B cell (primary cell): ENCODE measurements at regions of chr14 and their contacts with region 1.

Region 1: DNA sequence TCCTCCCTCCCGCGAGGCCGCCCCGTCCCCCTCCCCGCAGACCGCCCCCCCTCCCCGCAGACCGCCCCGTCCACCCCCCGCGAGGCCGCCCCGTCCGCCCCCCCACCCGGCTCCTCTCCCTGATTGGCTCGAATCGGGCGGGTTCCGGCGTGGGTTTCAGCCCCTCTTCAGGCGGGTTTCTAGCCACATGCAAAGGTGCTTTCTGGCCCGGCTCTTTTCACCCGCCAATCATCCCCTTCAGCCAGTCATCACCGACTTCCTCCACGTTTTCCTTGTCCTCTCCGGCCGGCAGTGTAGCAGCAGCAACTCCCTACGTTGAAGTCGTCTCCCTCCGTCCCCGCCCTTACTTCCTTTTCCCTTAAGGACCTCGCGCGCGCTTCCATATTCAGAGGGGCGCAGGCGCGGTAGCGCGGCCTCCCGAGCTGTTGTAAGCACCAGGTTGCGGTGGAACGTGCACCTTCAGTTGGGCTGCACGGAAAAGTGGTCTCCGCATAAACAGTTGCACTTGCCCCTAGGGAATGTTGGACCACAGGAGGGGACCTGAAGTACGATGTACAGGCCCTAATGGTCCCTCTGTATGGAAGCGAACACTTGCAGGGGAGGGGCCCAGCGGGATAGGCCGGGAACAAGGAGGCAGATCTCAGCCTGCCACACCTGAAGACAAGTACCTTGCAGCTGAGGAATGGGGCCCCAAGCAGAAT is 44.6 kb upstream of the ESR2 start:
- DNase-seq: peak; percentile 90
- ATAC-seq: peak; percentile 90
- H3K4me3 ChIP-seq: peak overlapping the region; percentile 28 to 90 (median 80)
- H3K4me3 Mint-ChIP-seq: peak overlapping the region; percentile 90
- H3K27ac ChIP-seq: peak overlapping the region; percentile 69 to 82
- H3K27ac Mint-ChIP-seq: peak overlapping the region; percentile 90
- H3K4me1 ChIP-seq: peaks cover 14 to 17% of the 10 kb centered on the region in 2 donors
- H3K4me1 Mint-ChIP-seq: peaks cover 26% of the 10 kb centered on the region
- H3K27me3 ChIP-seq: no peaks in the 10 kb centered on the region
- H3K27me3 Mint-ChIP-seq: no peaks in the 10 kb centered on the region
- CTCF ChIP-seq: no peak

Region 2: DNA sequence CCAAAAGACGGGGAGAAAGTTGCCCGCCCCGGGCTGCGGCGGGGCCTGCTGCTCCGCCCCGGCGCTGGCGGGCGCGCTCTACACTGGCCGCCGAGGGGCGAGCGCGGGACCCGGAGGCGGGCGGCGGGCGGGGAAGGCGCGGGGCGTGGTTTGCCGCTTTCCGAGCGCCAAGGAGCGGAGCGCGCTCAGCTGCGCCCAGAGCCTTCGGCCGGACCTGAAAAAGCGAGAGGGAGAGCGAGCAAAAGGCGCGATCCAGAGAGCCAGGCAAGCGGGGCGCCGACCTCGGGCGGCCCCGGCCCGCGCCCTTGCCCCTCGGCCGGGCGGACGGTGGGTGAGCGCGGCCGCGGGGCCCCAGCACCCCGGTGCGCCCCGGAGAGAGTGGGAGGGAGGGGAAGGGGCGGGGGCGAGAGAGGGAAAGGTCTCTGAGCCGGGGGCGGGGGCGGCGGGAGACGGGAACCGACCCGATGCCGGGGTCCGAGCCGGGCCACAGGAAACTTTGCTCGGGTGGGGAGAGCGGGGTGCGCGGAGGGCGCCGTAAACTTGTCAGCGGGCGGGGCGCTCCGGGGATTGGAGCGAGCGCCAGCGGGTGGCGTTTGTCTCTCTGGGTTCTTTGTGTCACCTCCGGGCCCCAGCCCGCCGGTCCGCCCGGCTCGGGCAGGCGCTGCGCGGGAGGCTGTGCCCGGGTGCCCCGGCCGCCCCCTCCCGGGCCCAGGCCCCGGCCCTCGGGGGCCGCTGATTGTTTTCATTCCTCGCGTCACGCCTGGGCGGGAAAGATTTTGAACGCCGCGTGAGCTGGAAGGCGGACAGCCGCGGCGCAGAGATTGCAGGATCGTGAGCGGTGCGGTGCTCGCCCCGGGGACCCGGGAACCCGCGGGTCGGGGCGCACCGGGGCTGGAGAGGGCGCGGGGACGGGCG is 485.7 kb before region 1 on chr14 and contains the start of gene SYNE2:
- CTCF ChIA-PET with region 1: no interaction called
- POLR2A ChIA-PET with region 1: no interaction called
- intact Hi-C with region 1: no loop called
- DNase-seq: peak; percentile 89
- ATAC-seq: peak; percentile 84
- H3K4me3 ChIP-seq: peak within 1 kb of the TSS; percentile 46 to 72 (median 64)
- H3K4me3 Mint-ChIP-seq: peak within 1 kb of the TSS; percentile 94
- H3K27ac ChIP-seq: peak within 1 kb of the TSS; percentile 30 to 43
- H3K27ac Mint-ChIP-seq: peak within 1 kb of the TSS; percentile 95
- H3K4me1 ChIP-seq: peaks cover 13 to 14% of the 10 kb centered on the region in 2 donors
- H3K4me1 Mint-ChIP-seq: peaks cover 27% of the 10 kb centered on the region
- H3K27me3 ChIP-seq: peaks cover 0 to 6% (median 0%) of the 10 kb centered on the region in 4 experiments
- H3K27me3 Mint-ChIP-seq: no peaks in the 10 kb centered on the region
- CTCF ChIP-seq: peak; percentile 33
- total RNA-seq, gene SYNE2: 105 TPM in 2 replicates

Region 3: DNA sequence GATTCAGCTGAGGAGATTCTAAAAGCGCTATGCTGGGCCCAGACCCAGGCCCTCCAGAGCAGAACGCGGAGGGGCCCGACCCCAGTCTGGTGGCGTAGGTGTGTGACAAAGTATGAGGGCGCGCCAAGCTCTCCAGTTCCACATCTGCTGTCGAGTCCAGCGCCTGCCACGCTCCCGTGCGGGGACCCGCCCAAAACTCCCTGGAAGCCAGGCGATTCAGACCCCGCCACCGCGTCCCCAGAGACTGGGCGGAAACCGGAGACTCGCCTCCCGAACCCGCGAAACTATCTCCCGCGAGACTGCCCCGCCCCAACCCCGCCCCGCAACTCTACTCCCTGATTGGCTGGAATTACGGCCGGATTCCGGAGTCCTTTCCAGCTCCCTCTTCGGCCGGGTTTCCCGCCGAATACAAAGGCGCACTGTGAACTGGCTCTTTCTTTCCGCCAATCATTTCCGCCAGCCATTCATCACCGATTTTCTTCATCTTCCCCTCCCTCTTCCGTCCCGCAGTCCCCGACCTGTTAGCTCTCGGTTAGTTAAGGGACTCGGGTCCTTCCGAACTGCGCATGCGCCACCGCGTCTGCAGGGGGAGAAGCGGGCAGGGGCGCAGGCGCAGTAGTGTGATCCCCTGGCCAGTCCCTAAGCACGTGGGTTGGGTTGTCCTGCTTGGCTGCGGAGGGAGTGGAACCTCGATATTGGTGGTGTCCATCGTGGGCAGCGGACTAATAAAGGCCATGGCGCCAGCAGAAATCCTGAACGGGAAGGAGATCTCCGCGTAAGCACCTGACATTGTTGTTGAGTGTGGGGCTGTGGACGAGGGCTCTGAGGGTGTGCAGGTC is 49.1 kb after region 1 on chr14 and contains the start of gene MTHFD1:
- CTCF ChIA-PET with region 1: interaction called, 4 read pairs
- POLR2A ChIA-PET with region 1: interaction called, 10 read pairs
- intact Hi-C with region 1: loop called (anchors 1 kb)
- DNase-seq: peak; percentile 98
- ATAC-seq: peak; percentile 75
- H3K4me3 ChIP-seq: peak within 1 kb of the TSS; percentile 68 to 93 (median 84)
- H3K4me3 Mint-ChIP-seq: peak within 1 kb of the TSS; percentile 93
- H3K27ac ChIP-seq: peak within 1 kb of the TSS; percentile 75 to 80
- H3K27ac Mint-ChIP-seq: peak within 1 kb of the TSS; percentile 95
- H3K4me1 ChIP-seq: peaks cover 27 to 34% of the 10 kb centered on the region in 2 donors
- H3K4me1 Mint-ChIP-seq: peaks cover 42% of the 10 kb centered on the region
- H3K27me3 ChIP-seq: no peaks in the 10 kb centered on the region
- H3K27me3 Mint-ChIP-seq: no peaks in the 10 kb centered on the region
- CTCF ChIP-seq: no peak
- total RNA-seq, gene MTHFD1: 47.1 and 51.3 TPM in 2 replicates

Region 4: GRCh38 chr14:64478634-64479250 is 140.0 kb after region 1 on chr14:
- CTCF ChIA-PET with region 1: interaction called, 71 read pairs
- POLR2A ChIA-PET with region 1: interaction called, 7 read pairs
- intact Hi-C with region 1: no loop called
- DNase-seq: peak; percentile 63
- ATAC-seq: no peak
- H3K4me3 ChIP-seq: no peak overlapping the region
- H3K4me3 Mint-ChIP-seq: no peak overlapping the region
- H3K27ac ChIP-seq: no peak overlapping the region
- H3K27ac Mint-ChIP-seq: no peak overlapping the region
- H3K4me1 ChIP-seq: no peaks in the 10 kb centered on the region
- H3K4me1 Mint-ChIP-seq: peaks cover 3% of the 10 kb centered on the region
- H3K27me3 ChIP-seq: no peaks in the 10 kb centered on the region
- H3K27me3 Mint-ChIP-seq: no peaks in the 10 kb centered on the region
- CTCF ChIP-seq: peak; percentile 85

Region 5: GRCh38 chr14:64540208-64541157 is 201.7 kb after region 1 on chr14 and contains the start of gene HSPA2:
- CTCF ChIA-PET with region 1: no interaction called
- POLR2A ChIA-PET with region 1: no interaction called
- intact Hi-C with region 1: loop called (anchors 1 kb)
- DNase-seq: peak; percentile 98
- ATAC-seq: peak; percentile 90
- H3K4me3 ChIP-seq: peak within 1 kb of the TSS; percentile 74 to 98 (median 85)
- H3K4me3 Mint-ChIP-seq: peak within 1 kb of the TSS; percentile 100
- H3K27ac ChIP-seq: peak within 1 kb of the TSS; percentile 60 to 67
- H3K27ac Mint-ChIP-seq: peak within 1 kb of the TSS; percentile 97
- H3K4me1 ChIP-seq: peaks cover 26 to 32% of the 10 kb centered on the region in 2 donors
- H3K4me1 Mint-ChIP-seq: peaks cover 31% of the 10 kb centered on the region
- H3K27me3 ChIP-seq: peaks cover 0 to 19% (median 5%) of the 10 kb centered on the region in 4 experiments
- H3K27me3 Mint-ChIP-seq: peaks cover 5% of the 10 kb centered on the region
- CTCF ChIP-seq: peak; percentile 78
- total RNA-seq, gene HSPA2: 14.9 and 19.6 TPM in 2 replicates

Region 6: GRCh38 chr14:64580467-64580866 is 241.7 kb after region 1 on chr14:
- CTCF ChIA-PET with region 1: no interaction called
- POLR2A ChIA-PET with region 1: no interaction called
- intact Hi-C with region 1: no loop called
- DNase-seq: no peak
- ATAC-seq: no peak
- H3K4me3 ChIP-seq: no peak overlapping the region
- H3K4me3 Mint-ChIP-seq: no peak overlapping the region
- H3K27ac ChIP-seq: no peak overlapping the region
- H3K27ac Mint-ChIP-seq: no peak overlapping the region
- H3K4me1 ChIP-seq: no peaks in the 10 kb centered on the region
- H3K4me1 Mint-ChIP-seq: no peaks in the 10 kb centered on the region
- H3K27me3 ChIP-seq: no peaks in the 10 kb centered on the region
- H3K27me3 Mint-ChIP-seq: peaks cover 3% of the 10 kb centered on the region
- CTCF ChIP-seq: no peak

Region 7: GRCh38 chr14:64880221-64881121 is 541.7 kb after region 1 on chr14:
- CTCF ChIA-PET with region 1: no interaction called
- POLR2A ChIA-PET with region 1: no interaction called
- intact Hi-C with region 1: loop called (anchors 10 kb)
- DNase-seq: peak; percentile 63
- ATAC-seq: peak; percentile 76
- H3K4me3 ChIP-seq: peak overlapping the region; percentile 16 to 65 (median 51)
- H3K4me3 Mint-ChIP-seq: peak overlapping the region; percentile 87
- H3K27ac ChIP-seq: no peak overlapping the region
- H3K27ac Mint-ChIP-seq: no peak overlapping the region
- H3K4me1 ChIP-seq: peaks cover 7 to 13% of the 10 kb centered on the region in 2 donors
- H3K4me1 Mint-ChIP-seq: peaks cover 12% of the 10 kb centered on the region
- H3K27me3 ChIP-seq: peaks cover 0 to 48% (median 35%) of the 10 kb centered on the region in 4 experiments
- H3K27me3 Mint-ChIP-seq: peaks cover 69% of the 10 kb centered on the region
- CTCF ChIP-seq: no peak